ENCODE measurements at regions of chr2 and their contacts with region 1.

Region 1: GRCh38 chr2:230179907-230180306 is 39.9 kb downstream of the SP110 start:
- DNase-seq: no peak
- H3K27ac ChIP-seq: no peak overlapping the region
- CTCF ChIP-seq: no peak

Region 2: GRCh38 chr2:230153390-230153976 is 26.4 kb before region 1 on chr2:
- CTCF ChIA-PET with region 1: no interaction called
- POLR2A ChIA-PET with region 1: interaction called, 11 read pairs
- DNase-seq: no peak
- H3K27ac ChIP-seq: no peak overlapping the region
- CTCF ChIP-seq: no peak

Region 3: GRCh38 chr2:230230087-230230486 is 50.2 kb after region 1 on chr2:
- CTCF ChIA-PET with region 1: no interaction called
- POLR2A ChIA-PET with region 1: no interaction called
- DNase-seq: no peak
- H3K27ac ChIP-seq: no peak overlapping the region
- CTCF ChIP-seq: no peak